Activated CD8-positive, alpha-beta T cell treated with anti-CD3 and anti-CD28 coated beads for 36 hours (primary cell): ENCODE measurements at regions of chr12 and their contacts with region 1.

Region 1: GRCh38 chr12:232731-233614 is 19.0 kb upstream of the SLC6A12 start:
- DNase-seq: no peak
- ATAC-seq: no peak
- H3K4me3 Mint-ChIP-seq: no peak overlapping the region
- H3K27ac Mint-ChIP-seq: no peak overlapping the region
- H3K4me1 Mint-ChIP-seq: no peaks in the 10 kb centered on the region
- H3K27me3 Mint-ChIP-seq: peaks cover 2% of the 10 kb centered on the region
- CTCF ChIP-seq: no peak

Region 2: GRCh38 chr12:219891-220352 is 13.1 kb before region 1 on chr12:
- CTCF ChIA-PET with region 1: interaction called, 14 read pairs
- POLR2A ChIA-PET with region 1: interaction called, 4 read pairs
- intact Hi-C with region 1: no loop called
- DNase-seq: peak; percentile 92
- ATAC-seq: peak; percentile 100
- H3K4me3 Mint-ChIP-seq: no peak overlapping the region
- H3K27ac Mint-ChIP-seq: no peak overlapping the region
- H3K4me1 Mint-ChIP-seq: no peaks in the 10 kb centered on the region
- H3K27me3 Mint-ChIP-seq: no peaks in the 10 kb centered on the region
- CTCF ChIP-seq: peak; percentile 90

Region 3: DNA sequence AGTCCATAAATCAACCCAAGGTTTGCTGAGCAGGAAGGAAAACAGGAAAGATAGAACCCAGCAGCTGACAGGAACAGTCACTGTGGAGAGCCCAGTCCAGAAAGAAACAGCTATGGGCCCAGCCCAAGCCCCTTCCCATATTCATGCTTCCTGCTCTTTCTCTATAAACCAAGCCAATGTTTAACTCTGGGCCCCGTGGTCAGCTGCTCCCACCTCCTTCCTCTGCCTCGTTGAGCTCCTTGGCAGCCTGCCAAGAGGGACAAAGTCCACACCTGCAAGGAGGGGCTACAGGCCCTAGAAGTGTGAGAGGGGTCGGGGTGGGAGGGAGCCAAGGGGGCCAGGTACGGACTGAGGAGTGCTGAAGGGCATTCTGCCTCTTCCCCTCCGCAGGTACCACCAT is 19.7 kb after region 1 on chr12:
- CTCF ChIA-PET with region 1: no interaction called
- POLR2A ChIA-PET with region 1: no interaction called
- intact Hi-C with region 1: no loop called
- DNase-seq: no peak
- ATAC-seq: no peak
- H3K4me3 Mint-ChIP-seq: no peak overlapping the region
- H3K27ac Mint-ChIP-seq: no peak overlapping the region
- H3K4me1 Mint-ChIP-seq: no peaks in the 10 kb centered on the region
- H3K27me3 Mint-ChIP-seq: peaks cover 16% of the 10 kb centered on the region
- CTCF ChIP-seq: no peak